ENCODE measurements at regions of chr1 and their contacts with region 1.

Region 1: DNA sequence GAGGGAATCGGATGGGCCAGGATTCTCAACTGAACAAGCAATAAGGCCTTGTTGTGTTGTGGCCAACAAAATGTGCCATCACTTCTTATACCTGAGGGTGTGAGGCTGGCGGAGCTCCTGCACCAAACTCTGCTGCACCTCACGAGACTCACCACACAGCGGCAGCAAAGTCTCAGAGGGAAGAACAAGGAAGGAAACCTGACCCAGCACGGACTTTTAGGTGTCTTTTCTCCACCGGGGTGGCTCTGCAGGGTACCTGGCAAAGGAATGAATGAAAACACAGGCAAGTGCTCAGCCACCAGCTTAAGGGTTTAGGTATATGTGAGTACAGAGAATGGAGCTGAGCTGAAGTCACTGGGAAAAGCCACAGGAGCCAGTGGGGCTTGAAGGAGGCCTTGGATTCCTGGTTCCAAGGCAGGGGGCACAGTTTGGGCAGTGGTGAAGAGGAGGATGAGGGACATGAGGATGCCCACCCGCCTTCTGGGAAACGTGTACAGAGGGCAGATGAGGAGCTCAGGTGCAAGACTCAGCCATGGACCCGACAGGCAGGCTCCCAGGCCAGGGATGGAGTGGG is 31.1 kb upstream of the HSD3B1 start:
- DNase-seq: peak; percentile 81
- H3K4me3 ChIP-seq: no peak overlapping the region
- H3K4me3 Mint-ChIP-seq: peak overlapping the region; percentile 31
- H3K27ac Mint-ChIP-seq: peak overlapping the region; percentile 80
- H3K4me1 ChIP-seq: 0 out of 2 replicates have a peak, but pooled peaks cover 8% of the 10 kb centered on the region
- H3K4me1 Mint-ChIP-seq: peaks cover 29% of the 10 kb centered on the region
- H3K27me3 ChIP-seq: no peaks in the 10 kb centered on the region
- H3K27me3 Mint-ChIP-seq: no peaks in the 10 kb centered on the region
- CTCF ChIP-seq: peak; percentile 51 to 78

Region 2: DNA sequence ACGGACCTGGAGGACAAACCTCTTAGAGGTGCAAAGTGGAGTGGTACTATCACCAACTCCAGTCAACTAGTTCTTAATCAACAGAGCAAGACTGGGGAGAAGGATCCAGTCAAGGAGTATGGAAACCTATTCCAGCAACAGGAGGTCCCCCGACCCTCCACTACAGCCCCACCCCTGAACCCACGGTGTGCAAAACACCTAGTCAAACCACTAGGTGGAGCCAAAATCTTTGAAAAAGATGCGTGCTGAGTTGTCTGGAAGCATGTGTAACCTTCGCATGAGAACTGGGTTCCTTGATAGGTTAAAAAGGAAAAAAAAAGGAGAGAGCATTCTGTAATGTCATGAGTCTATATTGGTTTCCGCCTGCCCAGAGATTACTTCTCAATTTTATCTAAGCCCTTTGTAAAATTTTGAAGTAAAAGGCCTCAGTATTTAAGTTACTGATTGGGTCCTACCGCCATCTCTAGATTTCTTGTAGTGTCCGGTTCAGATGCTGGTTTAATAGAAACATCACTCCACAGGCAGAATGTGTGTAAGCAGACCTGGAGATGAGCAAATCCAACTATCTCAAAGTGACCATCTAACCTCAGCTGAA is 189.3 kb before region 1 on chr1:
- CTCF ChIA-PET with region 1: no interaction called
- POLR2A ChIA-PET with region 1: no interaction called
- intact Hi-C with region 1: loop called (anchors 1 kb)
- DNase-seq: peak; percentile 54 to 67
- H3K4me3 ChIP-seq: no peak overlapping the region
- H3K4me3 Mint-ChIP-seq: no peak overlapping the region
- H3K27ac Mint-ChIP-seq: no peak overlapping the region
- H3K4me1 ChIP-seq: no peaks in the 10 kb centered on the region
- H3K4me1 Mint-ChIP-seq: peaks cover 7% of the 10 kb centered on the region
- H3K27me3 ChIP-seq: no peaks in the 10 kb centered on the region
- H3K27me3 Mint-ChIP-seq: no peaks in the 10 kb centered on the region
- CTCF ChIP-seq: peak; percentile 58 to 60

Region 3: GRCh38 chr1:119327436-119328155 is 148.4 kb before region 1 on chr1:
- CTCF ChIA-PET with region 1: no interaction called
- POLR2A ChIA-PET with region 1: no interaction called
- intact Hi-C with region 1: no loop called
- DNase-seq: peak; percentile 40 to 72
- H3K4me3 ChIP-seq: peak overlapping the region; percentile 34
- H3K4me3 Mint-ChIP-seq: peak overlapping the region; percentile 62
- H3K27ac Mint-ChIP-seq: no peak overlapping the region
- H3K4me1 ChIP-seq: no peaks in the 10 kb centered on the region
- H3K4me1 Mint-ChIP-seq: no peaks in the 10 kb centered on the region
- H3K27me3 ChIP-seq: no peaks in the 10 kb centered on the region
- H3K27me3 Mint-ChIP-seq: no peaks in the 10 kb centered on the region
- CTCF ChIP-seq: peak in 1 of 2 experiments; percentile 27

Region 4: DNA sequence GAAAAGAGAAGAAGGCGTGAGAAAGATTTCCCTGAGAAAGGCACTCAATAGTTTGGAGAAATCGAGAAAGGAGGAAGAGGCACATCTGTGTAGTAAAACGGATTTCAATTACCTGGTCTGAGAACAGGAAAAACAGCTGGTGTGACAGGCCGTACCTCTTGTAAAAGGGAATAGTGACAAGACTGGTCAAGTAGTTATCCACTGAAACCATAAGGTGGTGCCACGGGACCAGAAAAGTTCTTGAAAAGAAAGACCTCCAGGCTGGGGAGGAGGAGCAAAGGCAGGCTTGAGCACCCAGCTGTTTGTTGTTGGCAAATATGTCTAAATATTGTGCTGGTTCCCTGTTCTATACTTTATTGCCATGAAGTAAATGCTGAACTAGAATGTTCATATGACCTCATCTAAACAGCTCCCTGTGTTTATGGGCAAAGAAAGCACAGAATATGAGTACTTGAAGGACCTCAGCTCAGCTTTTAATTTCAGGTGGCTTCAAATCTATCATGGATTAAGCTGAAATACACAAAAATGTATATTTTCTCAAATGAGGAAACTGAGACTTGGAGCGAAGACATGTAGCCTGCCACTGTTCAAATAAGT is 103.4 kb before region 1 on chr1:
- CTCF ChIA-PET with region 1: interaction called, 19 read pairs
- POLR2A ChIA-PET with region 1: no interaction called
- intact Hi-C with region 1: loop called (anchors 1 kb)
- DNase-seq: peak; percentile 53 to 65
- H3K4me3 ChIP-seq: no peak overlapping the region
- H3K4me3 Mint-ChIP-seq: no peak overlapping the region
- H3K27ac Mint-ChIP-seq: no peak overlapping the region
- H3K4me1 ChIP-seq: no peaks in the 10 kb centered on the region
- H3K4me1 Mint-ChIP-seq: peaks cover 12% of the 10 kb centered on the region
- H3K27me3 ChIP-seq: no peaks in the 10 kb centered on the region
- H3K27me3 Mint-ChIP-seq: no peaks in the 10 kb centered on the region
- CTCF ChIP-seq: peak; percentile 34 to 36

Region 5: DNA sequence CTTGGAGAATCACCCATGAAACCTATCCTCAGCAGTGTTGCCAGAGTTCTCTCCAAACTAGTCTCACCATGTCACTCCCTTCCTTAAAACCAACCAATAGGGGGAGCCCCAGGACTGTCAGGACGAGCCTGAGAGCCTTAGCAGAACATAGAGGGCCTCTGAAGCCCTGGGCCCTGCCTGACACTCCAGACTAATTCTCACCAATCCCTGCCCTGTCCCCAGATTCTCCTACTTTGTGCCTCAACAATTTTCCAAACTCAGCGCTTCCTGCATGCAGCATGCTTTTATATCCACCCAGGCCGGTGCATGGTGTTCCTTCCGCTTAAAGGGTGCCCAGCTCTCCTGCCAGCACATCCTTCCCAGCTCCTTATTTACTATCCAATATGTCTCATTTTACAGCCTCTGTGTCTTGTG is 73.8 kb after region 1 on chr1:
- CTCF ChIA-PET with region 1: no interaction called
- POLR2A ChIA-PET with region 1: no interaction called
- intact Hi-C with region 1: loop called (anchors 2 kb)
- DNase-seq: peak; percentile 66 to 75
- H3K4me3 ChIP-seq: no peak overlapping the region
- H3K4me3 Mint-ChIP-seq: no peak overlapping the region
- H3K27ac Mint-ChIP-seq: no peak overlapping the region
- H3K4me1 ChIP-seq: no peaks in the 10 kb centered on the region
- H3K4me1 Mint-ChIP-seq: peaks cover 11% of the 10 kb centered on the region
- H3K27me3 ChIP-seq: no peaks in the 10 kb centered on the region
- H3K27me3 Mint-ChIP-seq: no peaks in the 10 kb centered on the region
- CTCF ChIP-seq: peak in 1 of 2 experiments; percentile 58

Region 6: GRCh38 chr1:119603695-119604094 is 127.7 kb after region 1 on chr1:
- CTCF ChIA-PET with region 1: no interaction called
- POLR2A ChIA-PET with region 1: no interaction called
- intact Hi-C with region 1: no loop called
- DNase-seq: no peak
- H3K4me3 ChIP-seq: no peak overlapping the region
- H3K4me3 Mint-ChIP-seq: no peak overlapping the region
- H3K27ac Mint-ChIP-seq: no peak overlapping the region
- H3K4me1 ChIP-seq: no peaks in the 10 kb centered on the region
- H3K4me1 Mint-ChIP-seq: peaks cover 12% of the 10 kb centered on the region
- H3K27me3 ChIP-seq: no peaks in the 10 kb centered on the region
- H3K27me3 Mint-ChIP-seq: no peaks in the 10 kb centered on the region
- CTCF ChIP-seq: no peak

Region 7: DNA sequence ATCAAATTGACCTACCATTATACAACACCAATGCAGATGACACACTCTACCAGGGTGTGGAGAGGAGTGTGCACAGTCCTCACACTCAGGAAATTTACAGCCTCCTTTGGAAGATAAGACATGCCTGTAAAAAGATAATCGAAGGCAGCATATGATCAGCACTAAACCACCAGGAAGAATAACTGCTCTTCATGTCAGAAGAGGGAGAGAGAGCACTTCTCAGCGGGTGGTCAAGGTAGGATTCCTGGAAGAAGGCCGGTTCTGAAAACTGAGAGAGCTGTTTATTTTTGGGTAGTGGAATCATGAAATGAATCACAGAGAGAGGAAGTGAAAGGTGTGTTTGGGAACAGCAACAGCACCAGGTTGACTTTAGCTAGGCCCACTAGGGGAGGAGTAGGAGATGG is 186.1 kb after region 1 on chr1:
- CTCF ChIA-PET with region 1: interaction called, 3 read pairs
- POLR2A ChIA-PET with region 1: no interaction called
- intact Hi-C with region 1: loop called (anchors 5 kb)
- DNase-seq: no peak
- H3K4me3 ChIP-seq: no peak overlapping the region
- H3K4me3 Mint-ChIP-seq: no peak overlapping the region
- H3K27ac Mint-ChIP-seq: no peak overlapping the region
- H3K4me1 ChIP-seq: peaks cover 22% of the 10 kb centered on the region
- H3K4me1 Mint-ChIP-seq: peaks cover 32% of the 10 kb centered on the region
- H3K27me3 ChIP-seq: no peaks in the 10 kb centered on the region
- H3K27me3 Mint-ChIP-seq: no peaks in the 10 kb centered on the region
- CTCF ChIP-seq: no peak

Region 8: GRCh38 chr1:119675349-119676345 is 199.7 kb after region 1 on chr1:
- CTCF ChIA-PET with region 1: interaction called, 5 read pairs
- POLR2A ChIA-PET with region 1: no interaction called
- intact Hi-C with region 1: loop called (anchors 5 kb)
- DNase-seq: peak; percentile 66 to 74
- H3K4me3 ChIP-seq: peak overlapping the region; percentile 28
- H3K4me3 Mint-ChIP-seq: peak overlapping the region; percentile 66
- H3K27ac Mint-ChIP-seq: no peak overlapping the region
- H3K4me1 ChIP-seq: no peaks in the 10 kb centered on the region
- H3K4me1 Mint-ChIP-seq: peaks cover 13% of the 10 kb centered on the region
- H3K27me3 ChIP-seq: no peaks in the 10 kb centered on the region
- H3K27me3 Mint-ChIP-seq: no peaks in the 10 kb centered on the region
- CTCF ChIP-seq: peak; percentile 65 to 68

Region 9: GRCh38 chr1:119895986-119896702 is 420.2 kb after region 1 on chr1 and contains the start of gene ADAM30:
- CTCF ChIA-PET with region 1: no interaction called
- POLR2A ChIA-PET with region 1: no interaction called
- intact Hi-C with region 1: no loop called
- DNase-seq: no peak
- H3K4me3 ChIP-seq: no peak within 1 kb of the TSS
- H3K4me3 Mint-ChIP-seq: no peak within 1 kb of the TSS
- H3K27ac Mint-ChIP-seq: no peak within 1 kb of the TSS
- H3K4me1 ChIP-seq: no peaks in the 10 kb centered on the region
- H3K4me1 Mint-ChIP-seq: peaks cover 8% of the 10 kb centered on the region
- H3K27me3 ChIP-seq: no peaks in the 10 kb centered on the region
- H3K27me3 Mint-ChIP-seq: no peaks in the 10 kb centered on the region
- CTCF ChIP-seq: no peak
- total RNA-seq, gene ADAM30: not detected in 2 replicates

Measured in Caco-2 (cell line).